B cell (primary cell): ENCODE measurements at regions of chr1 and their contacts with region 1.

Region 1: GRCh38 chr1:88655685-88656299 is 28.3 kb upstream of the PKN2 start:
- DNase-seq: peak; percentile 53
- ATAC-seq: no peak
- H3K4me3 ChIP-seq: no peak overlapping the region
- H3K4me3 Mint-ChIP-seq: no peak overlapping the region
- H3K27ac ChIP-seq: no peak overlapping the region
- H3K27ac Mint-ChIP-seq: no peak overlapping the region
- H3K4me1 ChIP-seq: no peaks in the 10 kb centered on the region
- H3K4me1 Mint-ChIP-seq: peaks cover 2% of the 10 kb centered on the region
- H3K27me3 ChIP-seq: no peaks in the 10 kb centered on the region
- H3K27me3 Mint-ChIP-seq: no peaks in the 10 kb centered on the region
- CTCF ChIP-seq: peak; percentile 88

Region 2: DNA sequence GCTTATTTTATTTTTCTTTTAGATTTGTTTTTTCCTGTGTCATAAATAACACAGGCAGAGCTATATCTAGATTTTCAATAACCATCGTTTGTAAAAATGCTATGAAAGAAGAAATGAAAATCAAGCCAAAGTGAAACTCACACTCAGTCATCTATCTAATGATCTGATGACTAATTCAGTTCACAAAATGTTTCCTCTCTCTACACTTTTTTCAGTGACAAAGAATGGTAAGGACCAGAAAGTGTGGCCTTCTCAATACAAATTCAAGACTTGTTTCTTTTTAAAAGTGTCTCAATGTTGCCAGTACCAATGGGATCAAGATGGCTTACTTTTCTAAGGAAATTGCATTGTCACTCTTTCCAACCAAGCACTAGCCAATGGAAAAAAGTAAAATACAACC is 254.5 kb before region 1 on chr1:
- CTCF ChIA-PET with region 1: no interaction called
- POLR2A ChIA-PET with region 1: no interaction called
- intact Hi-C with region 1: no loop called
- DNase-seq: no peak
- ATAC-seq: no peak
- H3K4me3 ChIP-seq: no peak overlapping the region
- H3K4me3 Mint-ChIP-seq: no peak overlapping the region
- H3K27ac ChIP-seq: no peak overlapping the region
- H3K27ac Mint-ChIP-seq: no peak overlapping the region
- H3K4me1 ChIP-seq: no peaks in the 10 kb centered on the region
- H3K4me1 Mint-ChIP-seq: no peaks in the 10 kb centered on the region
- H3K27me3 ChIP-seq: no peaks in the 10 kb centered on the region
- H3K27me3 Mint-ChIP-seq: no peaks in the 10 kb centered on the region
- CTCF ChIP-seq: no peak

Region 3: GRCh38 chr1:88877382-88877825 is 221.6 kb after region 1 on chr1:
- CTCF ChIA-PET with region 1: interaction called, 148 read pairs
- POLR2A ChIA-PET with region 1: no interaction called
- intact Hi-C with region 1: loop called (anchors 1 kb)
- DNase-seq: peak; percentile 47
- ATAC-seq: no peak
- H3K4me3 ChIP-seq: no peak overlapping the region
- H3K4me3 Mint-ChIP-seq: no peak overlapping the region
- H3K27ac ChIP-seq: no peak overlapping the region
- H3K27ac Mint-ChIP-seq: no peak overlapping the region
- H3K4me1 ChIP-seq: no peaks in the 10 kb centered on the region
- H3K4me1 Mint-ChIP-seq: peaks cover 20% of the 10 kb centered on the region
- H3K27me3 ChIP-seq: no peaks in the 10 kb centered on the region
- H3K27me3 Mint-ChIP-seq: no peaks in the 10 kb centered on the region
- CTCF ChIP-seq: peak; percentile 81